BJ (cell line): ENCODE measurements at regions of chr9 and their contacts with region 1.

Region 1: DNA sequence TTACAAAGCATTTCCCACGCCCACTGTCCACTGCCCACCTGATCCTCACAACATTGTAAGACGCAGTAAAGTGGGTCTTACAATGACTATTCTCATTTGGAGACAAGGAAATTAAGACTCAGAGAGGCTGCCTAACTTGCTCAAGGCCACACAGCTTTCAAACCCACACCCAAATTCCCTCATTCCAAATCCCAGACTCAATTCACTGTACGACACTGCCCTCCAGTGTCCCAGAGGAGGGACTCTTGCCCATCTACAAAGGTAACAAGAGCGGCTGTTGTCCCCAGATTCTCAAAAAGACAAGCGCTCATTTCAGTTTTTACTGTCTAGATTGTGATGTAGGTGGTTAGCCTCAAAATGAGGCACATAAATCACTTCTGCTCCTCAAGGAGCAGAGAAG is 184.6 kb downstream of the ACTL7B start:
- DNase-seq: peak; percentile 25
- H3K4me3 ChIP-seq: no peak overlapping the region
- H3K27me3 ChIP-seq: no peaks in the 10 kb centered on the region
- CTCF ChIP-seq: peak; percentile 69

Region 2: GRCh38 chr9:108761655-108762347 is 90.6 kb after region 1 on chr9:
- CTCF ChIA-PET with region 1: interaction called, 36 read pairs
- POLR2A ChIA-PET with region 1: no interaction called
- DNase-seq: no peak
- H3K4me3 ChIP-seq: no peak overlapping the region
- H3K27me3 ChIP-seq: no peaks in the 10 kb centered on the region; the same call in 1 of the 2 replicates
- CTCF ChIP-seq: peak; percentile 83